GM10248 (cell line): ENCODE measurements at regions of chr4 and their contacts with region 1.

Region 1: DNA sequence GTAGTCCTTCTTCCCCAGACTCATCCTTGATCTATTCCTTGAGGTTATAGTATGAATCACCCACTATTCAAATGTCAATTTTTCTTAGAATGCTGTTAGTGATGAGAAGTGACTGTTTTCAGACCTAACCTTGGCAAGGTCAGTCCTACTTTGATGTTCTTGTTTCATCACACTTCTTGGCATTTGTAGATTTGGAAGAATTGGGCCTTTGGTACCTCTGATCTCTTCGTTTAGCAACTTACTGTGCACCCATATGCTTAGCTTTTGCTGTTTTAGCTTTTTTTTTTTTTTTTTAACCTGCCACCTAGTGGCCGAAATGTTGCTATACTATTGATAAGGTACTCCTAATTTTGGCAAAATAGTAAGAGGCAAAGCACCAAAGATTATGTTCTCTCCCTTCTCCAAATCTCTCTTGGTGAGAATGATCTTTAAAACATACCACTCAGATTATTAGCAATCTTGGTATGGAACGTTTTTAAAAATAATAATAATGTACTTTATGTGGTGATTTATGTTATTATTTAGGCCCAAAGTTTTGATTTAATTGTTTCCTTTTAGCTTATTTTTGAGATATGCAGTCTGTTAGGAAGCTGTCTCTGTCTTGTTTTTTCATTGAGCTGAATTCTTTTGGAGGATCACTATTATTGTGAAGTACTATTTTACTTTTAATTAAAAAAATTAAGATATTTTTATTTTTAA is 16.6 kb downstream of the DCK start:
- DNase-seq: peak; percentile 50
- CTCF ChIP-seq: peak; percentile 54

Region 2: GRCh38 chr4:70993181-70994068 is 16.6 kb before region 1 on chr4 and contains the start of gene DCK:
- CTCF ChIA-PET with region 1: interaction called, 73 read pairs
- POLR2A ChIA-PET with region 1: interaction called, 8 read pairs
- DNase-seq: peak; percentile 94
- CTCF ChIP-seq: no peak

Region 3: GRCh38 chr4:71020611-71021010 is 10.6 kb after region 1 on chr4:
- CTCF ChIA-PET with region 1: interaction called, 54 read pairs
- POLR2A ChIA-PET with region 1: no interaction called
- DNase-seq: no peak
- CTCF ChIP-seq: no peak

Region 4: GRCh38 chr4:71026086-71026485 is 16.0 kb after region 1 on chr4:
- CTCF ChIA-PET with region 1: interaction called, 54 read pairs
- POLR2A ChIA-PET with region 1: no interaction called
- DNase-seq: no peak
- CTCF ChIP-seq: no peak